ENCODE measurements at regions of chr12 and their contacts with region 1.

Region 1: DNA sequence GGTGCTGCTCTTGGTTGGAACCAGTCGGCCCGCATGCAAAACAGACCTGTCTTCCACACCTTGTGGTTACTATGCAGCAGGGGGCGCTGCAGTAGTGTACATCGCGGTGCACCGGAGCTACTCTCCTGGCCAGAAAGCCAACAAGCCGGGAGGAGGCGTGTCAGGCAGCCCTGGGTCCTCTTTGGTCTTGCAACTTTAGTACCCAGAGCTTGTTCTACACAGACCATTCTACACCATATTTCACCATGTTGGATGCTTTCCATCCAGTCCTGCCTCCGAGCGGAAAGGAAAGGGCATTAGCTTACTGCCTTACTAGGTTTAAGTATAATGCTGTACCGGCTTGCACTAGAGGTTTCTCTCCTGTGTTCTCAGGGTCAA is 927 bp upstream of the TMTC2 start:
- DNase-seq: peak; percentile 75
- CTCF ChIP-seq: peak; percentile 87

Region 2: DNA sequence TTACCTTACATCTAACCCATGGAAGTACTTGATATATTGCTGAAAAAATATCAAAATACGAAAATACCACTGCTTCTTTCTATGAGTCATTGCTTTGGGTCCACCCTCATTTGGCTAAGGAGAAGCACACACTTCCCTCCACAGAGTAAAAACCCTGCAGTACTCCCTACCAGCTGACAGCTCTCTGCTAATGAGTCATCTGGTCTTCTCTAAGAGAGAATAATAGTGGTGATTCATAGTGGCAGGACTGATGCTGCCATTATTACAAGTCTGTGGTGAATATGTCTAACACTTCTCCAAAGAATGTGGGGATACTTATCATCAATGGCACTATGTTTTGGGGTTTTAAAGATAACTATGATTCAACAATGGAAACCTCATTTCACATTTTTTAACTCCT is 1017.3 kb before region 1 on chr12:
- in situ Hi-C with region 1: no loop called
- DNase-seq: no peak
- CTCF ChIP-seq: no peak

Region 3: DNA sequence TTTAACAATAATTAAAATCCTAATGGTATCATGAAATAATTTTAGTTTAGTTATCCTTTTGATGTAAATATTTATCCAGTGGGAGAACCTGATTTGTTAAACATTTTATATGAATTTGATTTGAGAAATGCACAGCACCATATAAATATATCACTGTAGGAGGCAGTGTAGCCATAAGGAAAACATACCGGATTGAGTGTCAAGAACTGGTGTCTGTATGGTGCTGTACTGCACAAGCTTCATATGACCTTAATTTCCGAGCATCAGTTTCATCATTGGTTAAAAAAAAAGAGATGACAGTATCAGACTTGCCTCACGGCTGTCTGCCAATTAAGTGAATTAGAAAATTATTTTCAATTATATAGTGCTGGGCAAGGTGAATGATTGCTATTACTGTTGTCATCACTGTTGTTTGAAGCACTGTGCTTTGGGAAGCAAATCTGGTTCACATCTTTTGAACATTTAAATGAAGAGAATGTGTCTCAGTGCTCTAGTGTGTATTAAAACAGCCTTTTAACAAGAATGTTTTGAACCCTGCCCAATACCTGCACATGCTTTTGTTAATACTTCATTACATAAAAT is 73.1 kb after region 1 on chr12:
- in situ Hi-C with region 1: no loop called
- DNase-seq: no peak
- CTCF ChIP-seq: no peak

Region 4: DNA sequence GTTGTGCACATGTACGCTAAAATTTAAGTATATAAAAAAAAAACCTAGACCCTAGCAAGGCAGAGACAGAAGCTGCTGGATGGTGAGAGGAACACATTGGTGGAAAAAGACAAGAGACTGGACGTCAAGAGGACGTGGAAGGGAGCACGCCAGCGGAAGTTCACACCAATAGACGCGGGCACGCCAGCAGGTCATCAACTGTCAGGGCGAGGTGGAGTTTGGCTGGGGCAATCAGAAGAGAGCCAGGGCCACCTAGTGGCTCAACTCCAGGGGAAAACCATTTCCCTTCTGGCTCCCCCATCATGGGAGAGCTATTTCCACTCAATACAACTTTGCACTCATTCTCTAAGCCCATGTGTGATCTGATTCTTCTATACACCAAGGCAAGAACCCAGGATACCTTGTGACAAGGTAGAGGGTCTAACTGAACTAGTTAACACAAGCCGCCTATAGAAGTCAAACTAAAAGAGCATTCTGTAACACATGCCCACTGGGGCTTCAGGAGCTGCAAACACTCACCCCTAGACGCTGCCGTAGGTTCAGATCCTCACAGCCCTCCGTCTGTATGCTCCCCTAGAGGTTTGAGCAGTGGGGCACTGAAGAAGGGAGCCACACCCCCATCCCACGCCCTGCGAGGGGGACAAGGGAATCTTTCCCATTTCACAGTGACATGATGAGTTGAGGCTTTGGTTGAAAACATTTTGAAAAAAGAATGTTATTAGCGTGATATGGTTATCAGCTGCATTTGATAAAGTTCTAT is 703.6 kb after region 1 on chr12:
- in situ Hi-C with region 1: loop called (anchors 25 kb)
- DNase-seq: no peak
- CTCF ChIP-seq: no peak

Region 5: GRCh38 chr12:83779526-83779925 is 1093.7 kb after region 1 on chr12:
- in situ Hi-C with region 1: no loop called
- DNase-seq: no peak
- CTCF ChIP-seq: no peak

Region 6: DNA sequence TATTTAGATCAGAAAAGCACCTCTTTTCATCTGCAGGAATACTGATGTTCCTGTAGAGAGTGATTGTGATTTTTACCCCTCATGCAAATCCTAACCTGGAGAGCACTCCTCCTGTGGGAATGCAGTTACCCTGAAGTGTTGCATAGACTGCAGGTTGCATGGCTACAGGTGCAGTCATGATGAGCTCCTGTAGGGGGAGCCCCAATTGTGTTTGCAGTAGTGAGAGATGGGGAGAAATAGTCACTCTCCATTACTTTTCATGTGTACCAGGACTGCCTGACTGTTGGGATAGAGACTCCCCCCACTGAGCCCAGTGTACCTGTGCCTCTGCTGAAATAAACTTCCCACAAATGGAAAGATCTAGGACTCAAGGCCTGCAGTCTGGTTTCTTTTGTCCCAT is 1140.3 kb after region 1 on chr12:
- in situ Hi-C with region 1: loop called (anchors 25 kb)
- DNase-seq: peak; percentile 28
- CTCF ChIP-seq: peak; percentile 74